AG04449 (cell line): ENCODE measurements at regions of chr11 and their contacts with region 1.

Region 1: DNA sequence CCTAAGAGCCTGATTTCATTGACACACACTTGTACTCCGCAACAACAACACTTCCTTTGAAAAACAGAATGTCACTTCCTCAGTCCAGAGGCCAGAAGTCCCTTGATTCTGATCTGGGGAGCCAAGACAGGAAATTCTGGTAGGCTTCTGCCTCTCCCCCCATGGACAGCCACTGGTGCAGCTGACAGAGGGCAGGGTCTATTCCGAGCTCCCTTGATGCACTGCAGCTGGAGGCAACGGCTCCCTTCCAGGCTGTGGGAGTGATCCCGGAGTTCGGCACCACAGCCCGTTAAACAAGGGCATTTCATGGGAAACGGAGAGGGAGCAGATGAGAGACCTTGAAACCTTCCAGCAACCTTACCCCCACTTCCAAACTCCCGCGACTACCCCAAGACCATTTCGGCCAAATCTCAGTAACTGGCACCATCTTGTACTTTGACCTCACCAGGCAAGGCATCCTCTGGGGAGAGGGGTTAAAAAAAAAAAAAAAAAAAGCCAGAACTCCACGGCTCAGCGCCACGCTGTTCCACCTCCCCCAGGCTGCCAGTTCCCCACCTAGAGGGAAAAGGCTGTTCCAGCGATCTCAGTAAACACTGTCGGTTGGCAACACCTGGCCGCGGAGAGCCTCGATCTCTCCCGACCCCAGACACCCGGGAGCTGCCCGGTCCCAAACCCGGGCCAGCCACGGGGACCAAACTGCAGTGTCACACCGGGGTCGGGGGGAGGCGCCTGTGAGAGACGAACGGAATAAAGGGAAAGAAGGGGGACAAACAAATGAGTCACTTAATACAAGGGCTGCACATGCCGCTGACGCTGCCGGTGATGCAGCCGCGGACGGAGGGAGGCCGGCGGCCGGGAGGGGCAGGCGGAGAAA is 1.1 kb downstream of the GAB2 start:
- DNase-seq: peak; percentile 45
- H3K4me3 ChIP-seq: peak overlapping the region; percentile 64
- CTCF ChIP-seq: peak; percentile 59

Region 2: DNA sequence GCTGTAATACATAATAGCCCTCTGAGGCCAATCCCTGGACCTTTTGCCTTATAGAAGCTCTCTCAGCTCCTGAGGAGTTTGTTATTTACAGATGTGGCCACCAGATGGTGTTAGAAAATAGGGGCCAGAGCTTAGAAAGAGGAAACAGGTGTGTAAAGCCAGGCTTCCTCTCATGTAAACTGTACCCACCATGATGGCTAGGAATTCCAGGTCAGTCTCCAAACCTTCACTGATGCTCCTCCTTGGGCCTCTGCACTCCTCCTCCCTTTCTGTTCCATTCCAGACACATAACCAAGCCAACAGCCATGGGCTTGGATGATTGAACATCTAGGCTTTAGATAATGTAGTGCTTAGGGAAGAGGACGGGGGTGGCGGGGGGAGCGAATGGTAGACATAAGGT is 188.1 kb before region 1 on chr11:
- CTCF ChIA-PET with region 1: interaction called, 27 read pairs
- POLR2A ChIA-PET with region 1: no interaction called
- DNase-seq: no peak
- H3K4me3 ChIP-seq: no peak overlapping the region
- CTCF ChIP-seq: peak; percentile 21

Region 3: DNA sequence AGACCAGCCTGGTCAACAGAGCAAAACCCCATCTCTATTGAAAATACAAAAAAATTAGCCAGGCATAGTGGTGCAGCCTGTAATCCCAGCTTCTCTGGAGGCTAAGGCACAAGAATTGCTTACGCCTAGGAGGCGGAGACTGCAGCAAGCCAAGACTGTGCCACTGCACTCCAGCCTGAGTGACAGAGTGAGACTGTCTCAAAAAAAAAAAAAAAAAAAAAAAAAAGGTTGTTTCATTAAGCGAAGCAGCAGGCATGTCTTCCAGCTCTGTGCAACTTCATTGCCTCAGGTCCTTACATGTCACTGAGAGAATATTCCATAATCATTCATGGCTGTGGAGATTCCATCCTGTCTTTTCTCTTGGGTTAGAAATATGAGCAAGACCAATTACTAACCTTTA is 15.8 kb before region 1 on chr11:
- CTCF ChIA-PET with region 1: interaction called, 25 read pairs
- POLR2A ChIA-PET with region 1: no interaction called
- DNase-seq: no peak
- H3K4me3 ChIP-seq: no peak overlapping the region
- CTCF ChIP-seq: no peak

Region 4: GRCh38 chr11:78432058-78432515 is 15.5 kb after region 1 on chr11:
- CTCF ChIA-PET with region 1: interaction called, 32 read pairs
- POLR2A ChIA-PET with region 1: no interaction called
- DNase-seq: no peak
- H3K4me3 ChIP-seq: no peak overlapping the region
- CTCF ChIP-seq: peak; percentile 27